ENCODE measurements at regions of chr6 and their contacts with region 1.

Region 1: DNA sequence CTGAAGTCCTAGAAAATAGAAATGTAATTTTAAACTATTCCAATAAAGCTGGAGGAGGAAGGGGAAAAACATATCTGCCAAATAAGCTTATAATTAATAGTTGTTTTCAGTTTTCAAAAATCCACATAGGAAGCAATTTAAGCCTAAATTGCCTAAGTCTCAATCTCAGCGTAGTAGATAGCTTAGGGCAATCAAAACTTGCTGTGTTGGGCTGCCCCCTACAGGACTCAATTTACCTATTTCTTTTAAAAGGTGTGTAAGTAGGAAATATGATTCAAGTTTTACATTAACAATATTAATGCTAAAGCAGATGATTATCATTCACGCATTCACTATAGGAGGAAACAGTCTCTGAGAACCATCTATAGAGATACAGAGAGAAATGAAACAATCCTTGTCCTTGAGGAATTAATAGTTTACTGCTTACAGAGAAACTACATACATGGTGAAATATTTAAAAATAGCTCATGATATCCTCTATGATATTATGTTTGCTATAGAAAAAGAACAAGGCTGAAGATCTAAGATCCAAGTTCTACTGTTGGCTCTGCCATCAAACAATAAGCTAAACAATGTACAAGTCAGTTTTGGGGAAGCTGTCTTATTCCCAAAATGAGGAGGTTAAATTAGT is 102.1 kb downstream of the ATG5 start:
- DNase-seq: peak; percentile 67
- H3K4me3 ChIP-seq: no peak overlapping the region
- H3K27ac ChIP-seq: no peak overlapping the region
- H3K4me1 ChIP-seq: peaks cover 5% of the 10 kb centered on the region
- H3K27me3 ChIP-seq: no peaks in the 10 kb centered on the region
- CTCF ChIP-seq: peak; percentile 74

Region 2: GRCh38 chr6:105431226-105431625 is 792.2 kb before region 1 on chr6:
- CTCF ChIA-PET with region 1: interaction called, 4 read pairs
- POLR2A ChIA-PET with region 1: no interaction called
- intact Hi-C with region 1: loop called (anchors 10 kb)
- DNase-seq: peak; percentile 60
- H3K4me3 ChIP-seq: no peak overlapping the region
- H3K27ac ChIP-seq: no peak overlapping the region
- H3K4me1 ChIP-seq: peaks cover 13% of the 10 kb centered on the region
- H3K27me3 ChIP-seq: no peaks in the 10 kb centered on the region
- CTCF ChIP-seq: peak; percentile 71

Region 3: GRCh38 chr6:105484238-105485161 is 738.9 kb before region 1 on chr6:
- CTCF ChIA-PET with region 1: no interaction called
- POLR2A ChIA-PET with region 1: no interaction called
- intact Hi-C with region 1: loop called (anchors 5 kb)
- DNase-seq: peak; percentile 66
- H3K4me3 ChIP-seq: no peak overlapping the region
- H3K27ac ChIP-seq: no peak overlapping the region
- H3K4me1 ChIP-seq: no peaks in the 10 kb centered on the region
- H3K27me3 ChIP-seq: no peaks in the 10 kb centered on the region
- CTCF ChIP-seq: peak; percentile 85

Region 4: GRCh38 chr6:105992315-105992961 is 231.0 kb before region 1 on chr6:
- CTCF ChIA-PET with region 1: no interaction called
- POLR2A ChIA-PET with region 1: no interaction called
- intact Hi-C with region 1: loop called (anchors 10 kb)
- DNase-seq: peak; percentile 87
- H3K4me3 ChIP-seq: peak overlapping the region; percentile 80
- H3K27ac ChIP-seq: no peak overlapping the region
- H3K4me1 ChIP-seq: peaks cover 6% of the 10 kb centered on the region
- H3K27me3 ChIP-seq: peaks cover 46% of the 10 kb centered on the region
- CTCF ChIP-seq: no peak

Region 5: DNA sequence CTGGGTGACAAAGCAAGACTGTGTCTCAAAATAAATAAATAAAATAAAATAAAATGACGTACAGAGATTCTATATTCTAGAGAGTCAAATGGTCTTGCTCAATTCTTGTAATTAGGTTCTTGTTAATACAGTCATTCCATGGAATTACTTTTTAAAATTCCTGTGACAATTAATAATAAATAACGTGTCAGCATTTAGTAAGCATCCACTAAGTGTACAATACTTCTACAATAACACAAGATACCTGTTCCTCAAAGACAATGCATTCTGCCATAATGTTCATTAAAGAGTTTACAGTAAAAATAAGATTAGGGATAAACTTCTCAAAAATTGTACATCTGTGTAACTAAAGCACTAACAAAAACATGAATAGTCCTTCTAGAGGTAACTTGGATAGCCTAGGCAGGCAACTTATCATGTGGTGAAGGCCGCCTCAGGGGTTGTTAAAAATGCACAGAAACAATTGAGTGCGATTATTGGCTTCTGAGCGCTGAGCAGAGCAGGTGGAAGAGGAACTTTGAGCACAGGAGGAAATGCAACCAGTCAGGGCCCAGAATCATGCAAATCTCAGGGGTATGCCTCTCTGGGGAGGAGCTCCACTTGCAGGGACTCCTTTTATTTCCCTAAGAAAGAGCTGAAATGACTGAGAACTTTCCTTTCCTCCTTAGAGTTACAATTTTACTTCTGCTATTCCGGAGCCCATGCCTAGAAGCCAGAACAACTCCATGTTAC is 443.0 kb after region 1 on chr6:
- CTCF ChIA-PET with region 1: no interaction called
- POLR2A ChIA-PET with region 1: no interaction called
- intact Hi-C with region 1: no loop called
- DNase-seq: no peak
- H3K4me3 ChIP-seq: no peak overlapping the region
- H3K27ac ChIP-seq: no peak overlapping the region
- H3K4me1 ChIP-seq: no peaks in the 10 kb centered on the region
- H3K27me3 ChIP-seq: no peaks in the 10 kb centered on the region
- CTCF ChIP-seq: no peak